HEK293 (cell line): ENCODE measurements at regions of chr3 and their contacts with region 1.

Region 1: GRCh38 chr3:11379233-11379823 is 107.1 kb downstream of the ATG7 start:
- H3K4me3 ChIP-seq: no peak overlapping the region
- H3K27ac ChIP-seq: peak overlapping the region; percentile 17; the same call in 1 of the 2 replicates
- H3K4me1 ChIP-seq: peaks cover 27% of the 10 kb centered on the region
- CTCF ChIP-seq: peak; percentile 67; the same call in 1 of the 2 replicates

Region 2: GRCh38 chr3:11392014-11392859 is 12.9 kb after region 1 on chr3:
- CTCF ChIA-PET with region 1: interaction called, 20 read pairs
- POLR2A ChIA-PET with region 1: no interaction called
- H3K4me3 ChIP-seq: no peak overlapping the region
- H3K27ac ChIP-seq: peak overlapping the region; percentile 24; the same call in 1 of the 2 replicates
- H3K4me1 ChIP-seq: peaks cover 11% of the 10 kb centered on the region
- CTCF ChIP-seq: no peak

Region 3: GRCh38 chr3:11514191-11514821 is 135.0 kb after region 1 on chr3:
- CTCF ChIA-PET with region 1: no interaction called
- POLR2A ChIA-PET with region 1: no interaction called
- H3K4me3 ChIP-seq: no peak overlapping the region
- H3K27ac ChIP-seq: no peak overlapping the region
- H3K4me1 ChIP-seq: peaks cover 16% of the 10 kb centered on the region
- CTCF ChIP-seq: peak; percentile 49; the same call in 1 of the 2 replicates

Region 4: GRCh38 chr3:11568503-11569155 is 189.3 kb after region 1 on chr3:
- CTCF ChIA-PET with region 1: interaction called, 12 read pairs
- POLR2A ChIA-PET with region 1: no interaction called
- H3K4me3 ChIP-seq: no peak overlapping the region
- H3K27ac ChIP-seq: no peak overlapping the region
- H3K4me1 ChIP-seq: no peaks in the 10 kb centered on the region
- CTCF ChIP-seq: no peak

Region 5: DNA sequence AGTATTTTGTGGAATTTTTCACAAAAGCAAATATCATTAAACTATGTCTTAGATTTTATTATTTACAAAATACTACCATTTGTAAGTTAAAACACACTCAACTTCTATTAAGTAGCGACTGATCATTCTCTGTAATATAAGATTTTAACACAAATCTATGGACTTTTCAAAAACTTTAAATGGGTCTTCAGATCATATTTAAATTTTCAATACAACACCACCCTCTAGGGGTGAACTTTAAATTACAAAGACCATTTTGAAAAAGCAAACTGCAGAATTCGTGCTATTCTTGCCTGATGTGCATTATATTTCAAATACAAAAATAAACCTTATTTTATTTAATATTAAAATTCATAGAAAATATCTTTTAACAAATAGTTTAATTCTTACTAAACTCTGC is 272.6 kb after region 1 on chr3:
- CTCF ChIA-PET with region 1: interaction called, 165 read pairs
- POLR2A ChIA-PET with region 1: no interaction called
- H3K4me3 ChIP-seq: no peak overlapping the region
- H3K27ac ChIP-seq: no peak overlapping the region
- H3K4me1 ChIP-seq: peaks cover 3% of the 10 kb centered on the region; the same call in 1 of the 2 replicates
- CTCF ChIP-seq: no peak

Region 6: DNA sequence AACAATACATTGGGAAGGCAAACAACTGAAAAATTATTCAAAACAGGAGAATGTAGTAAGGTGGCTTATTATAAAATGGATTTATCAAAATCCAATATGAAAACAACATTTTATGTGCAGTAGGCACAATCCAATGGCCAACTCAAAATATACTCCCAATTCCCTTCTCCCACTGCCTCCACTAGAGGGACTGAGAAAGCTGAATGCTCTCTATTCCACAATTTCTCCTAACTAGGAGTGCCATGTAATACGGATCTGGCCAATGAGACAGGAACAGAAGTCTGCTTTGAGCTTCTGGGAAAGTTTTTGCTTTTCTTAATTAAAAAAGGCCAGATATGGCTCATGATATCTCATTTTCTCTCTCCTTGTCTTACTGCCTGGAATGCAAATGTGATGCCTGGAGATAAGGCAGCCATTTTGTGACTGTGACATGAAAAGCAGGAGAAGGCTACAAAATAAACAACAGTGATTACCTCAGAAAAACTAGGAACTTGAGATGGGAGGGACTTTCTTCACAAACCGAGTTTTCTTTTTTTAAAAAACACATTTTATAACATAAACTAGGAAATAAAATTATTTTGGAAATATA is 283.2 kb after region 1 on chr3:
- CTCF ChIA-PET with region 1: interaction called, 165 read pairs
- POLR2A ChIA-PET with region 1: no interaction called
- H3K4me3 ChIP-seq: no peak overlapping the region
- H3K27ac ChIP-seq: no peak overlapping the region
- H3K4me1 ChIP-seq: no peaks in the 10 kb centered on the region
- CTCF ChIP-seq: no peak

Region 7: DNA sequence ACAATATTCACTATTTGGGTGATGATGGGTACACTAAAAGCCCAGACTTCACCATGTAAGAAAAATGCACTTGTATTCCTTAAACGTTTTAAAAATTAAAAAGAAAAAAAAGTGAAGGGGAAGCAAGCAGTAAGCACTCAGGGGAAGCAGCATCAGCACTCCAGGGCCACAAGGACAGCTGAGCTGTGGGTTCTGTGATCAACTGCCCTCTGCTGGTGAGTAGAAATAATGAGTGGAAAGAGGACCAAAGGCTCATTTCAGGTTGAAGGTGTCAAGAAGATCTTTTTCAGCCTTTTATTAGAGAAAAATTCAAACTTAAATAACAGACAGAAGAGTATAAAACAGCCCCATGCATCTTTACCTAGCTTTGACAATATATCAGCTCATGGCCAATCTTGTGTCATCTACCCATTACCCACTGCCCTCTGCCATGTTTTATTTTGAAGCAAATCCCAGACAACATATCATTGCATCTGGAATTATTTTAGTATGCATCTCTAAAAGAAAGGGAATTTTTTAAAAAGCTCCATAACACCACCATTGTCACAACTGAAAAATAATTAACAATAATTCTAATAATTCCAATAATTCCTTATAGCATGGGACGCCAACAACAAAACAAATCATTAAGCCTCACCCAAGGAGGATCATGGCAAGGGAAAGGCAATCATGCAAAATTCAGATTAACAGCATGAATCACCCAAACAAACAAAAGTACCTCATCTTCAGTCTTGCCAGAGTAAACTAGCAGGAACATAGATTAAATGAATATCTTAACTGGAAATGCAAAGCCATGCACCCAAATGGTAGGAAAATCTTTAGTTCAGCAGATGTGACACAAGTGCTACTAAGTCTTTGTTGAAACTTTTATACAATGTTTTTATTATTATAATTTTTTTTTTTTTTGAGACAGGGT is 424.9 kb after region 1 on chr3:
- CTCF ChIA-PET with region 1: interaction called, 17 read pairs
- POLR2A ChIA-PET with region 1: no interaction called
- H3K4me3 ChIP-seq: no peak overlapping the region
- H3K27ac ChIP-seq: no peak overlapping the region
- H3K4me1 ChIP-seq: no peaks in the 10 kb centered on the region
- CTCF ChIP-seq: no peak

Region 8: DNA sequence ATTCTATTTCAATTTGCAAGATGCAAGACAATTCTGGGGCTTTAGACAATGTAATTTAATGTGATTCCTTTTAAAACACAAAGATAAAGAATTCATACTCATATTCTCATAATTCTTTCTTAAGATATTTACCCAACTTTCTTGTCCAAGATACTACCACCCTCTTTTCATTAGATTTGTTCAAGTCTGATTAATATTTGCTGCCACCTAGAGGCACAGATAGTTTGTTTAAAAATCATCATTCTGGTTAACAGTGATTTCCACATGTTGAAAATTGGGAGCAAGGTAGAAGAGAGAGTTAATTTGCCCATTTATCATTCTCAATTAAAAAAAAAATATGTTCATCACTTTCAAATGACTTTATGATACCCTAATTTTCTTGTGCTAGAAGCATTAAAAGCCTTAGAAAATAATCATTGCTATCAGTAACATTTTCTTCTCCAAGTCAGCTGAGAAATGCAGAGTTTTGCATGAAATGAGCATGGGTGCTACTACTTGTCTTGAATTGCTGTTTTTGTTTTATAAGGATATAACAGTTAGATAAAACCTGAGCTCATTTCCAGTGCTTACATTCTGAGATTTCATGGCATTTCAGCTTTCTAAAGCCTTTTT is 455.8 kb after region 1 on chr3:
- CTCF ChIA-PET with region 1: interaction called, 12 read pairs
- POLR2A ChIA-PET with region 1: no interaction called
- H3K4me3 ChIP-seq: no peak overlapping the region
- H3K27ac ChIP-seq: no peak overlapping the region
- H3K4me1 ChIP-seq: no peaks in the 10 kb centered on the region
- CTCF ChIP-seq: no peak